Head of caudate nucleus (tissue), 42 donors: ENCODE measurements at regions of chr1 and their contacts with region 1.

Region 1: DNA sequence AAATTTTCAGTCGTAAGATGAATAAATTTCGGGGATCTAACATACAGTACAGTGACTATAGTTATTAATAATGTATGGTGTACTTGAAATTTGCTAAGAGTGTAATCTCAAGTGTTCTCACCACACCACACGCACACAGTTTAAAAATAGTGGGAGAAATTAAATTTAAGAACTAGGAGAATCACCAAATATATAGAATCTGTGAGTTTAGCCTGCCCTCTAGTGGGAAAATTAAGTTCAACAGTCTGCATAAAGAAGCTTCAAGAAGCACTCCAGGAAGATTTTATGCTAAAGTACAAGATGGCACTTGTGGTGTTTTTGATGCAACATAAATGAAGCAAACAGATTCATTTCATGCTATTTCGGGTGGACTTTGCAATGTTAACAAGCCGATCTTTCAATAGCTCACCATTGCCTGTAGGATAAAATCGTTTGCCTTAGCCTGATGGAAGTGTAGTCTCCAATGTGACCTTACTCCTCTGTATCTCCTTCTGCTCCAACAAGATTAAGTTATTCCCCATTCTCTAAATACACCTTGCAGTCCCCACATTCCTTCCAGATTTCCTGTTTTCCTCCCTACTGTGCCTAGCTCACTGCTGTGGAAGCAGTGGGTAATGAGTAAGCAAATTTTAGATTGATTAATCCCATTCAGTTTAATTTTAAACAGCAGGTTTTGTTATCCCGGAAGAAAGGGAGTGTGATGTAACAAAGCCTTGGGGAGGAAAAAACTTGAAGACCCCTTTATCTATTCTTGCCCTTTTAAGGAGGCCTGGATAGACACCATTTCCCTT is 8.7 kb upstream of the PIK3C2B start:
- DNase-seq: peak in 10 of 42 donors; percentile 40 to 78 (median 54)

Region 2: DNA sequence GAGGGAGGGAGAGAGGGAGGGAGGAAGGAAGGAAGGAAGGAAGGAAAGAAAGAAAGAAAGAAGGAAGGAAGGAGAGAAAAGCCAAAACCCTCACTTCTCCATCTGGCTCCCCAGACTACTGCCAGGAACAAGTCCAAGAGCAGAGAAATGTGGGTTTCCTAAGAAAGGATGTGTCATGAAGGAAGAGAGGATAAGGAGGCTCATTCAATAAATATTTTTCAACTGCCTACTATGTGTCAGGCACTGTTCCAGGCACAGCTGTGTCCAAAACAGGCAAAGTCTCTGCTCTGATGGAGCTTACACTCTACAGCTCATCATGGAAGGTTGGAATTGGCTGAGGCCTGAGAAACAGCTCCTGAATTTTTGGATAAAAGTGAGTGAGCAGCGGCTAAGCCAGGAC is 919.3 kb before region 1 on chr1:
- intact Hi-C with region 1: no loop called
- DNase-seq: no peak

Region 3: GRCh38 chr1:204307334-204307883 is 195.9 kb before region 1 on chr1:
- intact Hi-C with region 1: no loop called
- DNase-seq: peak in 39 of 42 donors; percentile 32 to 87 (median 65)

Region 4: DNA sequence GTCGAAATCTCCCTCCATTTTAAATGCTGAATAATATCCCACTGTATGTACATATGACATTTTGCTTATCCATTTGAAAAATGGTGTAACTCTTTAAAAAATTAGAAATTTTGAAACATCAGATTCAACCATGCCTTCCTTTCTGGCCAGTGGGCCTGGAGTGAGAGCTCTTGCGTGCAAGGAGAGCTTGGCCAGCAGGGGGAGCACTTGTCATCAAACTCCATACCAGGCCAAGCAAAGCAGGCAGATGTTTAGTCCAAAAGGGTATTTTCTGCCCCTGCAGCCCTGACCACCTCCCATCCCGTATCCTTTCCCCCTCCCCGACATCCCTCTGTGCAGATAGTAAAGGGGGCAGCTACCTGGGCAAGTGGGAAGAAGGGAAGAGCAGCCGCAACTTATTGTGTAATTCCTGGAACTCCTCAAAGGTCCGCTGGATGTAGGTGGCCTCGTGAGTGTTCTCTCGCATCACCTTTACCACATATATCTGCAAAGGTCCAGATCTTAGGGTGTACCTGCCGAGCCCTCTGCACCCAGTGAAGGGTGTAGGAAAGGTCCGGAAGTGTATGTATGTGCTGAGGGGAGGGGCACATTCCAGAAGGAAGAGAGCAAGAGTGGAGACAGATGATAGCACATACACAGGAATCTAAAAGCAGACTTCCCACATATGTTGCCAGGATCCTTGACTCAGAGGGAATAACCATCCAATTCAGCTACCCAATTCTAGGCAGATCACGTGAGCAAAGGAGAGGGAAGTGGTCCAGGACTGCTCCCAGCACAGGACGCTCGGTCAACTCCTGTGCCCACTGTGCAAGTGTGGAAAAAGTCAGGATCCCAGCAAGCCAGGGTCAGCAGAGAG is 71.8 kb before region 1 on chr1:
- intact Hi-C with region 1: loop called (anchors 5 kb)
- DNase-seq: peak; percentile 69 to 93 (median 83)

Region 5: GRCh38 chr1:204446370-204447111 is 56.8 kb before region 1 on chr1:
- intact Hi-C with region 1: loop called (anchors 5 kb)
- DNase-seq: peak; percentile 42 to 93 (median 80)

Region 6: DNA sequence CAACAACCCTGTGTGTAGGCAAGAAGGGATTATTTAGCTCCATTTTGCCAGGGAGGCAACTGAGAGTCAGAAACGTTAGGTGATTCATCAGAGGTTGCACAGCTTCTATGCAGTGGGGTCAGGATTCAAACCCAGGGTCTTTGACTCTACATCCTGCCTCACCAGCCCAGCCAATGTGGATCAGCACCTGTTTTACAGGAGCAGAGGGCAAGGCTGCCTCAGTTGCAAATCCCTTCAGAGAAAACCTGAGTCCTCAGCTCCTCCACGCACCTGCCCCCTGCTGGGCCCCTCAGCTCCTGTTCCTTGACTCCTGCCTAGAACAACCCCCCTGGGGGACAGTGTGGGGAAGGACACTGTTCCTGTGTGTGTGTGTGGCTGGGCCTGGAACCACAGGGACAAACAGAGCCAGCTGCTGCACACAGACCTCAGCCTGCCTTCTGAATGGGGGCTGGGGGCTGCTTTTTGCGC is 120.6 kb after region 1 on chr1:
- intact Hi-C with region 1: no loop called
- DNase-seq: no peak

Region 7: DNA sequence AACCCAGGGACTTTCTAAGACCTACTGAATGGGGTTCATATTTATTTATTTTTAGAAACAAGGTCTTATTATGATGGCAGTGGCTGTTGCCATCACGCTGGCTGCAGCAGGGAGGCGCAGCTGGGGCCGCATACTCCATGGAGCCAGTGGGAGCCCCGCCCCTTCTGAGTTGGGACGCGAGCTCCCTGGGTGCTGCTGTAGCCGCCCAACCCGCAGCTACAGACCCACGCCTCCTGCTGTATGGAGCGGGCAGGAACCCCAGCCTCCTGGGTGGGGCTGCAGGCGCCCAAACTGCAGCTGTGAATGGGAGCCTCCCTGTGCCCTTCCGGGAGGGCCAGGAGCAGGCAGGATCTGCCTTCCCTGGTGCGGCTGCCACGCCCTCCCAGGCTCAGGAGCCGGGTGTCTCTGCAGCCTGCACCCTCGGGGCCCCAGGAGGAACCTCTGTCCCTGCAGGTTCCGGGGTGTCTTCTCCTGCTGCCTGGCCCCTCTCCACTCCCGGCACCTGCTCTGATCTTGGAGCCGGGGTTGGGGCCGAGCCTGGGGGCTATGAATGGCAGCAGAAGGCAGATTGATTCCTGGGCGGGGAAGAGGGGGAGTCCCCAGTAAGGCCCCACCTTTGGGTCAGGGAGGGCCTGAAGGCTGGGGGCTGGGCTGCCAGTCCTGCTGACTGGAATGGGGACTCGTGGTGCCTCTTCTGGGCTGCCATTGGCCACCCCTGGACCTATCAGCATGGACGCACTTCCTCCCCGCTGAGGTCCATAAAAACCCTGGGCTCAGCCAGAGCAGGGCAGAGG is 248.8 kb after region 1 on chr1:
- intact Hi-C with region 1: no loop called
- DNase-seq: peak; percentile 12 to 75 (median 52)